ENCODE measurements at regions of chr15 and their contacts with region 1.

Region 1: DNA sequence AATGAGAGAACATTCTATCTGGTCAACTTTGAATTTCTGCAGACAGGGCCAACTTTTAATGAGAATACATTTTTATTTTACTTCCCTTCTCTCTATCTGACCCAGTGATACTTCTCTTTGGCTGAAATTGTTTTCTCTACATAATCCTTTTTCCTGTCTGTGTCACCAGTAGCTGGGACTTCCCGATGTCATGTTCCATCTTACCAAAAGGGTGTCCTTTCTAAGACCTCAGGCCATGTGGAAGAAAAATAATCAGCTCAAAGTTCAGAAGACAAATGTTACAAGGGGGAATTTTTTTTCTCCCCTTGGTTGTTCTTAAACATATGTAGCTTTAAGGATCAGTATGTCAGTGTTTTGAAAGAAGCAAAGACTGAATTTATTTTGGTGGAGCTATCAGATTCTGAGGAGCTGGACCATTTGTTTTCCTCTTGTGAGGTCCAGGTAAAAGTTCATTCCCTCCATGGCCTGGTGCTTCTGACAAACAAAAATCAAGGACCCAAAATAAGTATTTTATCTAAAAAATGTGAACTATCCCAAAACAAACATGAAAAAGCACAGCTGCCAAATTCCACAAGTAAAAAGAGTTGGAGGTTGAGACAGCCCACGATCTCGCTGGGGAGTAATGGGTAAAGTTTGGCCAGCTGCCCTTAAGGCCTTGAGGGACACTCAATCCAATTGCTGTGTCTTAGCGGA is 859.4 kb upstream of the NR2F2 start:
- DNase-seq: peak; percentile 21 to 71 (median 56)
- H3K4me3 ChIP-seq: no peak overlapping the region
- H3K27ac ChIP-seq: peak overlapping the region in 2 of 5 donors; percentile 60 to 66
- H3K4me1 ChIP-seq: peaks cover 0 to 16% of the 10 kb centered on the region in 2 donors
- H3K27me3 ChIP-seq: no peaks in the 10 kb centered on the region
- CTCF ChIP-seq: peak in 1 of 6 experiments; percentile 10
- POLR2A ChIP-seq: no peak

Region 2: DNA sequence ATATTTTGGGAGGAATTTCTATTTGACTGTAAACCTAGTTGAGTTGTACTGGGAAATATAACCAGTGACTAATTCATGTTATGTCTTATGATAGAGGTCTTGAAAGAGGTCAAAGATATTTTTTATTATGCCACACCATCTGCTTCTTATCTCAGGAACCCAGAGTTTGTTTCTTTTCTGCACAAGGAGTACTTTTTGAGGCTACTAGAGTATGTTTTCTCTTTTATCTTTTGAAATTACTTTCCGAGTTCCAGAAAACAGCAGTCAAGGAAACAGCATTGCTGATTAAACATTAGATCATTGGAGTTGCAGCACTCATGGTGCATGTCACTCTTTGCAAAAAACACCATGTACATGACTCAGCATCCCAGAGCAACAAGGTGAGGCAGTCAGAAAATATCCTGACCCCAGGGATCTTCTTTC is 213.6 kb after region 1 on chr15:
- intact Hi-C with region 1: no loop called
- DNase-seq: peak in 4 of 7 donors; percentile 12 to 25 (median 17)
- H3K4me3 ChIP-seq: no peak overlapping the region
- H3K27ac ChIP-seq: no peak overlapping the region
- H3K4me1 ChIP-seq: no peaks in the 10 kb centered on the region
- H3K27me3 ChIP-seq: no peaks in the 10 kb centered on the region
- CTCF ChIP-seq: no peak
- POLR2A ChIP-seq: no peak

Region 3: DNA sequence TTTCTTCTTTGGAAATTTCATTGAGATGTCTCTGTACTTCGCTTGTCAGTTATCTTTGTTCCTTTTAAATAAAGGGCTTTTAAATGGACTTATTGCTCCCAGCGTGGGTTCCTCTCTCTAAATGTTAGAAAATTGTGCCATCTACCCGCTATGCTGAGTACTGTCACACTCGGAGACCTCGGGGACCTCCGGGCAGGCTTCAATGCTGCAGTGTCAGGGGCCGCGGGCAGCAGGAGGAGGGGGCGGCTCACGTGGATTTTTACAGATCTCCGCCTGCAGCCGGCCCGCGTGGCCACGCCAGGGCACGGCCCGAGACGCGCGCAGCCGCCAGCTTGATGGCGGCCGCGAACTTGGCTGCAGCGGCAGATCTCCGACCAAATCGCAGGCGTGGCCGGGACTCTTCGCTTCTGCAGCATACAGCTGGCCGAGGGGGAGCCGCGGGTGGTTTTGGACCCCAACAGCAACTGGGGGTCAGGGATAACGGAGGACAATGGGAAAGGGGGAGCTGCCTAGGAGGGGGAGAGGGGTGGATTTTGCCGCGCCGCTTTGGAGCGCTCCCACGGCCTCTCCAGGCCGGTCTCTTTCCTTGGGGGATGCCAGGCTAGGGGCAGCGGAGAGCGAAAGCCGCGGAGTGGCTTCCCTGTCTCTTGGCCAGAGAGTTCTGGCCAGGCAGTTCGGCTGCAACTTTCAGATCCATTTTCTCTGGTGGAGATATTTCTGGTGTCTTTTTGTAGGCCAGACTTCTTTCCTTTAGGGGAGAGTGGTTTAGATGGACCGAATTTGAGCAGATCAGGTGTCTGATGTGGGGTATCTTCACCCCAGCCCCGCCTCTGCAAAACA is 874.6 kb after region 1 on chr15:
- intact Hi-C with region 1: loop called in 1 of 2 experiments (anchors 10 kb)
- DNase-seq: peak; percentile 85 to 95 (median 91)
- H3K4me3 ChIP-seq: peak overlapping the region in 3 of 4 donors; percentile 13 to 82 (median 15)
- H3K27ac ChIP-seq: peak overlapping the region; percentile 54 to 95 (median 93)
- H3K4me1 ChIP-seq: peaks cover 0 to 23% of the 10 kb centered on the region in 2 donors
- H3K27me3 ChIP-seq: no peaks in the 10 kb centered on the region
- CTCF ChIP-seq: peak; percentile 34 to 78 (median 70)
- POLR2A ChIP-seq: peak in 1 of 2 donors; percentile 82

Measured in adrenal gland (tissue), 19 donors.